WTC11 (cell line): ENCODE measurements at regions of chr10 and their contacts with region 1.

Region 1: DNA sequence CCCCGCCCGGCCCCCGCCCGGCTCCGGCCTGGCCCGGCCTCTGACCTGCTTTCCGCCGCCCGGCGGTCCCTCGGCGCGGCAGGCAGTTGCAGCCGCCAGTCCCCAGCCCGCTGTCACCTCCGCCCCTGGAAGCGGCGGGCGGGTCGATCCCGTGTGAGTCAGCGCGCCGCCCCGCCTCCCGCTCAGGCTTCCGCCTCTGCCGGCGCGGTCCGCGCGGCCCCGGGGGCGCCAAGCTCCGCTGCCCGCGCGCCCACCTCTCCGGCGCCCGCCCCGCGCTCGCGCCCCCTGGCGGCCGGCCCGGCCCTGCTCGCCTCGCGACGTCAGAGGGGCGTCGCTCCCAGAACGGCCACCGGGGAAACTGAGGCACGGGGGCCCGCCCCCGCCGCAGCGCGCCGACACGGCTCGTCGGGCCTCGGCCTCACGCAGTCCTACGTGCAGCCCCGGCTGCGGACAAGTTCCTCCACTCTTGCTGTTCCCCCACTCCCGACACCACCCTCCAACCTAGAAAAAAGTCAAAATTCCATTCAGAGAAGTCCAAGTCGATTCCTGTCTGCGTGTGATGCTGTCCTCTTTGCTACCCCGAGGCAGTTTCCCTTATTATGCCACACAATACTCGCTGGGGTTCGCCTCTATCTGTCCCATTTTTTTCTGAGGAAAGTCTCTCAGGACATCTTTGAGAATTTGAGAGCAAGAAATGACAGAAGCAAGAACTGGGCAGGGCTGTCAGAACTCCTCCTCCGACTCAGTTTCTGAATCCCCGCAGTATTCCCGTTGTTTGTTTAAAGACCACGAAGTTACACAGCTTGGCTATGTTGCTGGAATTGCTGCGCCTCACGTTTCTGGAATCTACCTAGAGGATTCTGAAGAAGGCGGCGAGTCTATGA is at the start of gene DNMBP:
- DNase-seq: peak; percentile 84
- ATAC-seq: peak; percentile 96
- H3K4me3 Mint-ChIP-seq: peak within 1 kb of the TSS; percentile 82
- H3K27ac Mint-ChIP-seq: no peak within 1 kb of the TSS
- H3K4me1 Mint-ChIP-seq: peaks cover 40% of the 10 kb centered on the region
- H3K27me3 Mint-ChIP-seq: peaks cover 21% of the 10 kb centered on the region
- CTCF ChIP-seq: peak; percentile 64
- total RNA-seq, gene DNMBP: 19.7 to 25.3 TPM (median 22.2 TPM) in 3 replicates

Region 2: GRCh38 chr10:99854860-99855259 is 155.2 kb before region 1 on chr10:
- CTCF ChIA-PET with region 1: interaction called, 10 read pairs
- POLR2A ChIA-PET with region 1: no interaction called
- DNase-seq: no peak
- ATAC-seq: peak; percentile 18
- H3K4me3 Mint-ChIP-seq: no peak overlapping the region
- H3K27ac Mint-ChIP-seq: peak overlapping the region; percentile 43; the same call in 1 of the 2 replicates
- H3K4me1 Mint-ChIP-seq: peaks cover 52% of the 10 kb centered on the region
- H3K27me3 Mint-ChIP-seq: peaks cover 2% of the 10 kb centered on the region; the same call in 1 of the 2 replicates
- CTCF ChIP-seq: no peak

Region 3: DNA sequence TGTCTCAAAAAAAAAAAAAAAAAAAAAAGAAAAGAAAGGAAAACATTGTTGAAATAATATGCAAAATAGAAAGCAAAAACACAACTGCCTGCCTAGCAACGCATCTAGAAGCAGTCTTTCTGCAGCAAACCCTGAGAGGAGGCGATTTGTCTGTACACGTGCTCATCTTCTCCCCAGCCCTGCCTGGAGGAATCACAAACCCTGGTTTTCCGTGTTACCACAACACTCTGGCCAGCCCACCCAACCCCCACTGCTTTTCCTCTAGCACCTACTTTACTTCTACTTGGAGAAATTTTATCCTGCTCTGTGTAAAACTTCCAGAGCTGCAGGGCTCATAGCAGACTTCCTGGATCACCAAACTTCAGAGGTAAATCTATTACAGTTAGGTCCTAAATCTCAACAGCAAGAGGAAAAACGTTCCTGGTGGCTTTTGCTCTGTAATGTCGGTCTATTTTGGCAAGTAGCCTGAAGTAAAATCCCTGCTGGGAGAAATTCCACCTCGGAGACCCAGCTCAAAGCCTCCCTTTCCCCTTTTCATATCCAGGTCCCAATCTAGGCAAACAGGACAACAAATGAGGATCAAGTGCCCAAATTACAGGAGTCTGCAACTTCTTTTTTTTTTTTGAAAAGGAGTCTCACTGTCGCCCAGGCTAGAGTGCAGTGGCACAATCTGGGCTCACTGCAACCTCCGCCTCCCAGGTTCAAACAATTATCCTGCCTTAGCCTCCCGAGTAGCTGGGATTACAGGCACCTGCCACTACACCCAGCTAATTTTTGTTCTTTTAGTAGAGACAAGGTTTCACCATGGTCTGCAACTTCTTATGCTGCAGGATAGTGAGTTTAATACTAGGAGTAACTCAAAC is 91.8 kb before region 1 on chr10:
- CTCF ChIA-PET with region 1: interaction called, 54 read pairs
- POLR2A ChIA-PET with region 1: interaction called, 8 read pairs
- DNase-seq: peak; percentile 73
- ATAC-seq: peak; percentile 49
- H3K4me3 Mint-ChIP-seq: peak overlapping the region; percentile 68
- H3K27ac Mint-ChIP-seq: peak overlapping the region; percentile 99
- H3K4me1 Mint-ChIP-seq: peaks cover 68% of the 10 kb centered on the region
- H3K27me3 Mint-ChIP-seq: no peaks in the 10 kb centered on the region
- CTCF ChIP-seq: no peak

Region 4: GRCh38 chr10:99993701-99994689 is 16.0 kb before region 1 on chr10:
- CTCF ChIA-PET with region 1: interaction called, 10 read pairs
- POLR2A ChIA-PET with region 1: no interaction called
- DNase-seq: no peak
- ATAC-seq: peak; percentile 56
- H3K4me3 Mint-ChIP-seq: no peak overlapping the region
- H3K27ac Mint-ChIP-seq: no peak overlapping the region
- H3K4me1 Mint-ChIP-seq: peaks cover 9% of the 10 kb centered on the region
- H3K27me3 Mint-ChIP-seq: no peaks in the 10 kb centered on the region
- CTCF ChIP-seq: no peak